Endothelial cell of umbilical vein (primary cell): ENCODE measurements at regions of chr5 and their contacts with region 1.

Region 1: GRCh38 chr5:43484106-43484849 is 613 bp upstream of the TMEM267 start:
- DNase-seq: peak; percentile 88
- H3K4me3 ChIP-seq: peak overlapping the region; percentile 57 to 97 (median 64)
- H3K27ac ChIP-seq: peak overlapping the region; percentile 77
- H3K4me1 ChIP-seq: peaks cover 14% of the 10 kb centered on the region
- H3K27me3 ChIP-seq: no peaks in the 10 kb centered on the region
- CTCF ChIP-seq: peak; percentile 63 to 82
- POLR2A ChIP-seq: no peak

Region 2: DNA sequence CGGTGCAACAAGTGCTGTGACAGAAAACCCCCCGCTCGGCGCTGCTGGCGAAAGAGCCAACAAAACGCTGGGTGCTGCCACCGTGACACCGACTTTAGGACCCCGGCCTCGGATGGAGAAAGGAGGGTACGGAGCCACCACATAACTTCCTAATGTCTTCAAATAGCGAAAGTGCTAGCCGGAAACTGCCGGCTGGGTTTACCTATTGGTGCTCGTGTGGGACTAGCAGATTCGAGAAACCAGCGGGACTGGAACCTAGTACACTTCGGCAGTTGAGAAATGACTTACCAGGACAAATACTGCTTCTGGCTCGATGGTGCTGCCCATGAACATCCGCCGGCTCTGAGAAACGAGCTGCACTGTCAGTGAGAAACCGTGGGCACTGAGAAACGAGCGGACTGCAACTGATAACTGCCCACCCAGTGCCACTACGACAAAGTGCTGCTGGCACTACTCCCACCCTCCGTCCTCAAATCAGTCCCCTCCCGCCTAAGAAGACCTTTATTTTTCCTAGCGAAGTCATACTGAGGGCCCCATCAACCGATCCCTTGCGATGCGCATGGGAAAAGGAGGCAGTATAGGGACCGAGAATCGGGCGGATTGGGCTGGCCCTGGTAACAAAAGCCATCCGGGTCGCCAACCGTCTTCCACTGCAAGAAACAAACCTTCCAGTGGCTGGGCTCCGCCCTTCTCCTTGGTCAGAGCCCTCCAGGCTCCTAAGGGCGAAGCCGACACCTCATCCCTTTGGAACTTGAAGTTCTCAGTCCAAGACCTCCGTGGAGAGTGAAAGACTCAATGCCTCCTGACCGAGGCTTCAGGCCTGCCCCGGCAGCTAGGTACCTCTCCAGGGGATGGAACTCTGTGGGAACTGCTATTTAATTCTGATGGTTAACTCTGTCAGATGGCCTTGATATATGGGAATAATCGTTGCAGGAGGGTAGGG is 417.2 kb before region 1 on chr5:
- CTCF ChIA-PET with region 1: no interaction called
- POLR2A ChIA-PET with region 1: interaction called, 5 read pairs
- dilution Hi-C with region 1: no loop called
- intact Hi-C with region 1: loop called (anchors 5 kb)
- DNase-seq: peak; percentile 91
- H3K4me3 ChIP-seq: peak overlapping the region; percentile 24 to 76 (median 76)
- H3K27ac ChIP-seq: peak overlapping the region; percentile 86
- H3K4me1 ChIP-seq: peaks cover 24% of the 10 kb centered on the region
- H3K27me3 ChIP-seq: no peaks in the 10 kb centered on the region
- CTCF ChIP-seq: no peak
- POLR2A ChIP-seq: peak; percentile 73

Region 3: GRCh38 chr5:43305948-43306565 is 178.2 kb before region 1 on chr5:
- CTCF ChIA-PET with region 1: interaction called, 14 read pairs
- POLR2A ChIA-PET with region 1: no interaction called
- dilution Hi-C with region 1: no loop called
- intact Hi-C with region 1: no loop called
- DNase-seq: peak; percentile 71
- H3K4me3 ChIP-seq: no peak overlapping the region
- H3K27ac ChIP-seq: no peak overlapping the region
- H3K4me1 ChIP-seq: peaks cover 19% of the 10 kb centered on the region
- H3K27me3 ChIP-seq: no peaks in the 10 kb centered on the region
- CTCF ChIP-seq: peak; percentile 39 to 43
- POLR2A ChIP-seq: no peak

Region 4: DNA sequence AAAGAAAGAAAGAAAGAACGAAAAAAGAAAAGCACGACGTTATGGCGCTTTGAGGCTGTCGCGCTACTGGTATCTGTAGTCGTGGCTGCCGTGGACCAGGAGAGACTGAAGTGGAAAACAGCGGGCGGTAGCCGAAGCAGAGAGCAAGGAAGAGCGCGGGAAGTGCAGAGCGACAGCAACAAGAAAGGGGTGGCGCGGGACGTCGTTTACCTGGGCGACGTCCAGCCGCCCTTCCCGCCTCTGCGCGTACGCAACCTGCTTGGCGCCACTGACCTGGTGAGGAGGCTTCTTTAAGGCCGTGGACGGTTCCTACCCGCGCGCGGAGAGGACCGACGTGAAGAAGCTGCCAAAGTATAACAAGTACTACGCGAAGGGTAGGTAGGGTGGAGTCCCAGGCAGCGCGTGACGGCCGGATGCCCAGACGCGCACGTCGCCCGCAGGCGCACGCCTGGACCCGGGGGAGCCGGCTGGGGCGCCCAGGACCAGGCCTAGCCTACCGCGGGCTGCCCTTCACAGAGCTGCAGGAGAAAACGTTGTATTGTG is 87.4 kb before region 1 on chr5:
- CTCF ChIA-PET with region 1: interaction called, 54 read pairs
- POLR2A ChIA-PET with region 1: no interaction called
- dilution Hi-C with region 1: no loop called
- intact Hi-C with region 1: no loop called
- DNase-seq: peak; percentile 26
- H3K4me3 ChIP-seq: peak overlapping the region; percentile 15 to 74 (median 37)
- H3K27ac ChIP-seq: no peak overlapping the region
- H3K4me1 ChIP-seq: peaks cover 6% of the 10 kb centered on the region
- H3K27me3 ChIP-seq: peaks cover 3% of the 10 kb centered on the region in 2 experiments
- CTCF ChIP-seq: no peak
- POLR2A ChIP-seq: no peak

Region 5: GRCh38 chr5:43523662-43524072 is 39.4 kb after region 1 on chr5:
- CTCF ChIA-PET with region 1: interaction called, 13 read pairs
- POLR2A ChIA-PET with region 1: no interaction called
- dilution Hi-C with region 1: no loop called
- intact Hi-C with region 1: no loop called
- DNase-seq: no peak
- H3K4me3 ChIP-seq: no peak overlapping the region
- H3K27ac ChIP-seq: no peak overlapping the region
- H3K4me1 ChIP-seq: no peaks in the 10 kb centered on the region
- H3K27me3 ChIP-seq: no peaks in the 10 kb centered on the region
- CTCF ChIP-seq: no peak
- POLR2A ChIP-seq: no peak